ENCODE measurements at regions of chr3 and their contacts with region 1.

Region 1: DNA sequence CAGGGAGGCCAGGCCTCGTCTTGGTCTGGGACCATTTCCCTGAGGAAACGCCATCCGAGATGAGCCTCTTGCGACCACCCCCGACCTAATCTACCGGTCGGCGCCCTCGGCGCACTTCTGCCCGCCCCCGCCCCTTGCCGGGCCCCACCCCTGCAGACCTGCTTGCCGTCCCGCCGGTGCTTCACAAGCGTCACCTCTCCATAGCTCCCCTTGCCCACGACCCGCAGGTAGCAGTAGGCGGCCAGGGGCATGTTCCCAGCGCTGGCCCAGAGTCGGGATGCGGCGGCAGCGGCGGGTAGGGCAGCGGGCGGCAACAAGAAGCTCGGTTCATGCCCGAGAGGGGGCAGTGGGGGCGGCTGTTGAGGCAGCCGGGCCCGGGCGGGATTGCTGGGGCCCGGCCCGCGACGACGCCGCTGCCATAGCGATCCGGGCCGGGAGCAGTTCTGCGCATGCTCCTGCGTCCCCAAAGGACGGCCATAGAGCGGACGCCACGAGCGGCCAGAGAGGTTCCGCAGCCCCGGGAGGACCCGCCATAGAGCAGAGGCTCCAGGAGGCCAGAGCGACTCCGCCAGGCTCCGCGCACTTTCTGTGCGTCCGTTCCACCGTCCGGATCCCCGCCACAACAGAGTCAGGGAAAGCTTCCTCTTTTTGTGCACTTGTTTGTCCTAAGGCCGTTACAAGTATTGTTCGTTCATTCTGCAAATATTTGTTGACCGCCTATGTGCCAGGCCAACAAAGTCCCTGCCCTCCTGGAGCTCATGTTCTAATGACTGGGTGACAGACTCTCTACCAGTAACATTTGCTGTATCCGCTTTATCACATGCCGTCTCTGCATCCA is at the start of gene NEK4:
- DNase-seq: peak; percentile 95
- H3K4me3 ChIP-seq: peak within 1 kb of the TSS; percentile 74 to 95 (median 94)
- H3K27ac ChIP-seq: peak within 1 kb of the TSS; percentile 72 to 83 (median 74)
- H3K4me1 ChIP-seq: peaks cover 13 to 21% (median 19%) of the 10 kb centered on the region in 4 donors
- H3K27me3 ChIP-seq: no peaks in the 10 kb centered on the region
- CTCF ChIP-seq: peak in 1 of 3 experiments; percentile 4
- EP300 ChIP-seq: no peak
- POLR2A ChIP-seq: no peak
- total RNA-seq, gene NEK4: 19.1 to 29.2 (median 23.6) TPM

Region 2: GRCh38 chr3:52670621-52671521 is 99.8 kb before region 1 on chr3:
- intact Hi-C with region 1: no loop called
- DNase-seq: no peak
- H3K4me3 ChIP-seq: no peak overlapping the region
- H3K27ac ChIP-seq: peak overlapping the region; percentile 52 to 71 (median 56)
- H3K4me1 ChIP-seq: peaks cover 12 to 23% (median 18%) of the 10 kb centered on the region in 4 donors
- H3K27me3 ChIP-seq: no peaks in the 10 kb centered on the region
- CTCF ChIP-seq: no peak
- EP300 ChIP-seq: no peak
- POLR2A ChIP-seq: no peak

Region 3: GRCh38 chr3:52845691-52846431 is 75.1 kb after region 1 on chr3:
- intact Hi-C with region 1: loop called (anchors 5 kb)
- DNase-seq: no peak
- H3K4me3 ChIP-seq: no peak overlapping the region
- H3K27ac ChIP-seq: peak overlapping the region; percentile 78 to 83 (median 80)
- H3K4me1 ChIP-seq: peaks cover 50 to 83% (median 74%) of the 10 kb centered on the region in 4 donors
- H3K27me3 ChIP-seq: no peaks in the 10 kb centered on the region
- CTCF ChIP-seq: peak; percentile 25 to 64 (median 36)
- EP300 ChIP-seq: no peak
- POLR2A ChIP-seq: no peak

Region 4: DNA sequence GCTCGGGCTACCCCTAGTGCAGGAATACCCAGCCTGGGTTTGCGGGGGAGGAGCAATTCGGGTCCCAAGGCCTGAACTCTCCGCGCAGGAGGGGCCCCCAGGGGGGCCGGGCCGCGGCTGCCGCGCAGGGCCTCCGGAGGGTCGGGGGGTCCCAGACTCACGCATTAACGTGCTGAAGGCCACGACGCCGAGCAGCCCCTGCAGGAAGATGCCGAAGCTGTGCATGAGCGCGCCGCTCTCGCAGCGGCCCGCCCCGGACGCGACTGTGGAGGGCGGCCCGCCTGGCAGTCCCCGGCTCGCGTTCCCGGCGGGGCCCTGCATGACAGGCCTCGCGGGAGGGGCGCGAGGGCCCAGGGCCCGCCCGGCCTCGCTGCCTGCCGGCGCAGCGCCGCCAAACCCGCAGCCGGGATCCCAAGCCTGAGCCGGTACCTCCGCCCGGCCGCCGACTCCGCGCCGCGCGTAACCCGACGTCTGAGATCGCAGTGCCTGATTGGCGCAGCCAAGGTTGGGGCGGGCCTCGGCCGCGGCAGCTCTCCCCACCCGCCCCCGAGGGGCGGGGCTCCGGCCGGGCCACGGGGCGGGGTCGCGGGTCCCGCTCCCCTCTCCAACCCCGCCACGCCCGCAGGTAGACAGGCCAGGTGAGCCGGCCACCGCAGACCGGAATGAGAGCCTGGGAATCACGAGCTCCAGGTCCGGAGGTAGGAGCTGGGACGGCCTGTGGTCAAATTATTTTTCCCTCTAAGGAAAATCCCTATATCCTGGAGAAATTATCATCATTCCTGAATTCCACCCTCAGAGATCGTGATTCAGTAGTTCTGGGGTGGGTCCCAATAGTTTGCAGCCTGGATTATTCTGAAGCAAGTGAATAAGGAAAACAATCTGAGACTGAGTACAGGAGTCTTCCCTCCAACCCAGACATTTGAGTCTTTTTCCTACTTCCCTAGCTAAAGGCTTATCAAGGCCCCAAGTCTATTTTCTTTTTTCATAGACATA is 126.7 kb after region 1 on chr3 and contains the start of gene STIMATE:
- intact Hi-C with region 1: loop called (anchors 10 kb)
- DNase-seq: no peak
- H3K4me3 ChIP-seq: peak within 1 kb of the TSS; percentile 73 to 90 (median 78)
- H3K27ac ChIP-seq: peak within 1 kb of the TSS; percentile 69 to 85 (median 76)
- H3K4me1 ChIP-seq: peaks cover 30 to 52% (median 51%) of the 10 kb centered on the region in 4 donors
- H3K27me3 ChIP-seq: no peaks in the 10 kb centered on the region
- CTCF ChIP-seq: peak in 1 of 3 experiments; percentile 15
- EP300 ChIP-seq: no peak
- POLR2A ChIP-seq: no peak
- total RNA-seq, gene STIMATE: 10.4 to 23.6 (median 14.7) TPM

Region 5: DNA sequence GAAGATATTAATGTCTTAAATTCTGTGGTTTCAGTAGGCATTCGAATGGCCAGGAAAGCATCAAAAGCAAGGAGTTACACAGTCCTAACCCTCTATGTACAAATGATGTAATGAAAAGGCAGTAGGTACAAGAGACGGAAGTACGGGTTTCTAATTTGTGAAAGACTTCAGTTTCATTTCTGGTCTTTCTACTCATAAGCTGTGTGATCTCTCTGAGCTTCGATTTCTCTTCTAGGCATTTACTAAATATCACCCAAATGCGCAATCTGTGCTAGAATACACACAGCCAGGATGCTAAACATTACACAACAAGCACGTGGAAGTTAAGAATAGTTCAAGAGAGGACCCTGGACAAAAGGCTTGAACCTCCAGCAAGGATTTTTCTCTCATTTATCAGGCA is 144.6 kb after region 1 on chr3:
- intact Hi-C with region 1: no loop called
- DNase-seq: no peak
- H3K4me3 ChIP-seq: no peak overlapping the region
- H3K27ac ChIP-seq: no peak overlapping the region
- H3K4me1 ChIP-seq: no peaks in the 10 kb centered on the region
- H3K27me3 ChIP-seq: no peaks in the 10 kb centered on the region
- CTCF ChIP-seq: no peak
- EP300 ChIP-seq: no peak
- POLR2A ChIP-seq: no peak

Region 6: GRCh38 chr3:52934630-52935530 is 164.2 kb after region 1 on chr3:
- intact Hi-C with region 1: loop called (anchors 10 kb)
- DNase-seq: no peak
- H3K4me3 ChIP-seq: no peak overlapping the region
- H3K27ac ChIP-seq: no peak overlapping the region
- H3K4me1 ChIP-seq: peaks cover 0 to 4% (median 0%) of the 10 kb centered on the region in 4 donors
- H3K27me3 ChIP-seq: no peaks in the 10 kb centered on the region
- CTCF ChIP-seq: peak; percentile 59 to 82 (median 78)
- EP300 ChIP-seq: no peak
- POLR2A ChIP-seq: no peak